ENCODE measurements at regions of chr11 and their contacts with region 1.

Region 1: GRCh38 chr11:86244522-86245368 is at the start of gene EED:
- DNase-seq: peak; percentile 90
- ATAC-seq: peak; percentile 87
- H3K4me3 Mint-ChIP-seq: no peak within 1 kb of the TSS
- H3K27ac Mint-ChIP-seq: no peak within 1 kb of the TSS
- H3K4me1 Mint-ChIP-seq: peaks cover 31% of the 10 kb centered on the region
- H3K27me3 Mint-ChIP-seq: no peaks in the 10 kb centered on the region
- CTCF ChIP-seq: no peak
- total RNA-seq, gene EED: 55.2 and 63.7 TPM in 2 replicates

Region 2: DNA sequence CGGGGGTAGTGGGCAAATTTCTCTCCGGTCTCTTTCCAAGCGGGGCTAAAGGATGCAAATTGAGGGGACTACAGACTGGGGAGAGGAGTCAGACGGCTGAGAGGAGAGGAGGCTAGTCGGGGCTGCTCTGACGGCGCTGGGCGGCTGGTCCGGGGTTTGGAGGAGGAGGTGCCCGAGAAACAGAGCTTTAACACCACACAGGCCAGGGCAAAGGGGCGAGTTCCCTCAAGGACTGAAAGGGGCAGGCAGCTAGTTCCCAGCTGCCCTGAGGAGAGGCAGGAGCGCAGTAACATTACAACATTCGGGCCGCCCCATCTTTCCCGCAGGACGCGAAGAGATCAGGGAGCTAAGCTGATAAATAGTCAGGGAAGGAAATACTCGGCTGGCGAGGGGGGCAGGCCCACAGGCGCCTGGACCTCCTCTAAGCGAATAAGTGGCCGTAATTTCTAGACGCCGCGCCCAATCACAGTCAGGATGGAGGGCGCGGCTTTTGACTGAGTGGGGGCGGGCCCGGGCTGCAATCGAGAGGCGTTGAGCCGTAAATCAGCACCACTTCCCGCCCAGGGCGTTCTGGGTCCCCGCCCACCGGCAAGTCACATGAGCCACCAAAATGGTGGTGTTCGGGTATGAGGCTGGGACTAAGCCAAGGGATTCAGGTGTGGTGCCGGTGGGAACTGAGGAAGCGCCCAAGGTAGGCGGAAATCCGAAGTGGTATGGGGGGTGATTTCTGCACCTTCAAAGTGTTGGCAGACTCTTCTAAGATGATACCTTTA is 616.6 kb before region 1 on chr11 and contains the start of gene TMEM126B:
- CTCF ChIA-PET with region 1: no interaction called
- POLR2A ChIA-PET with region 1: no interaction called
- intact Hi-C with region 1: loop called (anchors 1 kb)
- DNase-seq: peak; percentile 89
- ATAC-seq: peak; percentile 98
- H3K4me3 Mint-ChIP-seq: peak within 1 kb of the TSS; percentile 99
- H3K27ac Mint-ChIP-seq: peak within 1 kb of the TSS; percentile 94
- H3K4me1 Mint-ChIP-seq: peaks cover 28% of the 10 kb centered on the region
- H3K27me3 Mint-ChIP-seq: peaks cover 2% of the 10 kb centered on the region
- CTCF ChIP-seq: no peak
- total RNA-seq, gene TMEM126B: 35.5 and 43.4 TPM in 2 replicates

Region 3: DNA sequence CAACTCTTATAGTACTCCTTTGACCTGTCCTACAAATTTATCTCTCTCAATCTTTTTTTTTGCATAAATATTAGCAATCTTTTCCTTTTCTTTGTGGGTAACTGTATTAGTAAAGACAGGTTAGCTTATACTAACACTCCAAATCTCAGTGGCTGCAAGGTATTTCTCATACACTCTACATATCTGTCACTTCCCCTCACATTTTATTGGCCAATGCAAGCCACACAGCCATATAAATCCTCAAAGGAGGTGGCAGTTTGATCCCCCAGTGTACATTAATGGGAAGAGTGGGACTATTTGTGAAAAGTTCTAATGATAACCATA is 42.8 kb before region 1 on chr11:
- CTCF ChIA-PET with region 1: no interaction called
- POLR2A ChIA-PET with region 1: interaction called, 20 read pairs
- intact Hi-C with region 1: loop called (anchors 1 kb)
- DNase-seq: no peak
- ATAC-seq: peak; percentile 46
- H3K4me3 Mint-ChIP-seq: no peak overlapping the region
- H3K27ac Mint-ChIP-seq: no peak overlapping the region
- H3K4me1 Mint-ChIP-seq: peaks cover 9% of the 10 kb centered on the region
- H3K27me3 Mint-ChIP-seq: no peaks in the 10 kb centered on the region
- CTCF ChIP-seq: no peak

Region 4: DNA sequence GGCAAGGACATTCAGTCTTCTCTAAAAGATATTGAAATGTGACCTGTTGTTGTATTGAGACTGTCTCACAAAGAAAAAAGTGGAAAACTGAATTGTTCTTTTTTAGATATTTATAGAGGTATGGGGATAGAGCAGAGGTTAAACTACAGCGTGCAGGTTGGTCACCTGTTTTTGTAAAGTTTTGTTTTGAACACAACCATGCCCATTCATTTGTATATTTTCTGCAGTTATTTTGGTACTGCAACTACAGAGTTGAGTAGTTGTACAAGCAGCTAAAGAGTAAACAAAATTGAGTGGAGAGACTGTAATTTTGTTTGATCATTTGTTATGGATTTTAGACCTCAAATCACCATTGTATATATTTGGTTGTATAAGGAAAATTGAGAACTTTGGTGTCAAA is 11.2 kb after region 1 on chr11:
- CTCF ChIA-PET with region 1: no interaction called
- POLR2A ChIA-PET with region 1: interaction called, 10 read pairs
- intact Hi-C with region 1: no loop called
- DNase-seq: no peak
- ATAC-seq: no peak
- H3K4me3 Mint-ChIP-seq: no peak overlapping the region
- H3K27ac Mint-ChIP-seq: no peak overlapping the region
- H3K4me1 Mint-ChIP-seq: peaks cover 21% of the 10 kb centered on the region
- H3K27me3 Mint-ChIP-seq: no peaks in the 10 kb centered on the region
- CTCF ChIP-seq: no peak

Region 5: GRCh38 chr11:86302100-86302793 is 57.5 kb after region 1 on chr11 and contains the start of gene HIKESHI:
- CTCF ChIA-PET with region 1: no interaction called
- POLR2A ChIA-PET with region 1: interaction called, 14 read pairs
- intact Hi-C with region 1: loop called (anchors 1 kb)
- DNase-seq: peak; percentile 72
- ATAC-seq: peak; percentile 98
- H3K4me3 Mint-ChIP-seq: peak within 1 kb of the TSS; percentile 99
- H3K27ac Mint-ChIP-seq: peak within 1 kb of the TSS; percentile 94
- H3K4me1 Mint-ChIP-seq: peaks cover 27% of the 10 kb centered on the region
- H3K27me3 Mint-ChIP-seq: no peaks in the 10 kb centered on the region
- CTCF ChIP-seq: no peak
- total RNA-seq, gene HIKESHI: 33.8 and 35.6 TPM in 2 replicates